Uterus (tissue), 4 donors: ENCODE measurements at regions of chr22 and their contacts with region 1.

Region 1: DNA sequence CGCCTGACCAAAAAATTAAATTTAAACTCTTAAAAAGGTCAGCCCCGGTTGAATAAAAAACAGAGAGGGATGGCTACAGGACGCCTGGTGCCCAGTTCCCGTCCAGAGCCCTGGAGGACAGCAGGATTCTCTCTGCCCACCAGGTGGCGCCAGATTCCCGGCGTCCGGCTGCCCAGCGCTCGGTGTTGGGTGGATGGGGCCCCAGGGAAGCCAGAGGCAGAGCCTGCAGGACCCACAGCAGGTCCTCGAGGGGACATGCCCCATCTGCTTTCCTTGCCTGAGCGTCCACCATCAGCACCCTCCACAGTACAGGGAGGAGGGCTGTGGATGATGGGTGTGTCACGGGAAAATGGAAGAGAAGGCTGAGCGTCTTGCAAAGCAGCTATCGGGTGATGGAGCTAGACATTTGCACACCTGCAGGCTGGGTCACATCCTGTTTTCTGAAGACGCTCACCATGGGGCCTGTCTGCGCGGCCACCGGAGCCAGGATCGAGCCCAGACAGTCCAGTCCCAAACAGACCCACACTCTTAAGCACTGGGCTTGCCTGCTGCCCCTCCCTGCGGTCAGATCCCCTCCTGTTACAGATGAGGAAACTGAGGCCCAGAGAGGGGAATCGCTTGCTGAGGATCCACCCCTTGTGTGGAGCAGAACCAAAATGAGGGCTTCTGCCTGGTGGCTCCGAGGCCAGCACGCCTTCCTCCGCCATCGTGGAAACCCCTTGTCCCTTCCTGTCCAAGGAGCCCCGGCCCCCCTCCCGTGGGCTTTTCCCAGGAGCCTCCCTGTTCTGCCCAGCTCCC is 18.5 kb upstream of the CBX7 start:
- DNase-seq: peak; percentile 81 to 86
- H3K4me3 ChIP-seq: no peak overlapping the region
- H3K27ac ChIP-seq: peak overlapping the region in 1 of 2 donors; percentile 1
- H3K4me1 ChIP-seq: peaks cover 0 to 33% of the 10 kb centered on the region in 2 donors
- H3K27me3 ChIP-seq: no peaks in the 10 kb centered on the region
- CTCF ChIP-seq: peak; percentile 96 to 99 (median 96)
- POLR2A ChIP-seq: peak in 1 of 2 donors; percentile 14

Region 2: DNA sequence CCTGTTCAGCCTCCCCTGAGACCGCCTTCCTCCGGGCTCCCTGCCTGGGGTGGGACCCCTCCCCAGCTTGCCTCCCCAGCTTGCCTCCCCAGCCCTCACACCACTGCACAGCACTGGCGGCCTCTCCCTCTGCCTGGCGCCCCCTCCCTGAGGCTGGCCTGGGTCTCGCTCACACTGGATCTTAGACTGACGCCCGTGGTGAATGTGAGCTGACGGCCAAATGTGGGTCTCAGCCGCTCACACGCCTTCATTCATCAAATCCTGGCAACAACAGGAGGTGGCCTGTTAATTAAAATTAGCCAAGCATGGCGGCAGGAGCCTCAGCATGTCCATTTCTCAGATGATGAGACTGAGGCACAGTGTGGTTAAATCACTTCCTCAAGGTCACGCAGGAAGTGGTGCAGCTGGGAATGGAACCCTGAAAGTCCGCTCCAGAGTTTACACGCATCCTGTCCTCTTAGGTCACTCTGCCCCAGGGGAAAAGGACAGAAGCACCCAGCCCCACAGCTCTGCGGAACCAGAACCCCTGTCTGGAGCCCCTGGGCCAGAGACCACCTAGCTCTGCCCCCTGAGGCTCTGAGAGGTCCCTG is 128.7 kb after region 1 on chr22:
- intact Hi-C with region 1: no loop called
- DNase-seq: no peak
- H3K4me3 ChIP-seq: no peak overlapping the region
- H3K27ac ChIP-seq: peak overlapping the region in 1 of 2 donors; percentile 40
- H3K4me1 ChIP-seq: peaks cover 0 to 26% of the 10 kb centered on the region in 2 donors
- H3K27me3 ChIP-seq: no peaks in the 10 kb centered on the region
- CTCF ChIP-seq: no peak
- POLR2A ChIP-seq: no peak

Region 3: GRCh38 chr22:39309881-39310714 is 139.1 kb after region 1 on chr22:
- intact Hi-C with region 1: loop called (anchors 2 kb)
- DNase-seq: no peak
- H3K4me3 ChIP-seq: no peak overlapping the region
- H3K27ac ChIP-seq: peak overlapping the region; percentile 83 to 84
- H3K4me1 ChIP-seq: peaks cover 0 to 10% of the 10 kb centered on the region in 2 donors
- H3K27me3 ChIP-seq: no peaks in the 10 kb centered on the region
- CTCF ChIP-seq: no peak
- POLR2A ChIP-seq: no peak

Region 4: DNA sequence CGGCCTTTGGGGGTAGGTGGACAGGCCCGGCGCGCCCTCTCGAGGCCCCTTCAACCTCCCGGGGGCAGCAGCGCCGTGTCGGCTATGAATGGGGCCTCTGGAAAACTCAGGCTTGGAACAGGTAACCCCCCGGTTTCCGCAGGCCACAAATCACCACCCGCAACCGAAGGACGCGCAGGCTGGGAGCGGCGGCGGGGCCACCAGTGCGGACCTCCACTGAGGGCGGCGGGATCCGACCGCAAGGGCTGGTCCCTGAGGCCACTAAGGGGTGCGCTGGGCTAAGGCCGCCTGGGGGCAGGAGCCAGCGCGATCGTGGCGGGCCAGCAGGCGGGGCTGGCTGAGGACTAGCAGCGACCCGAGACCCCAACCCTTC is 348.6 kb after region 1 on chr22:
- intact Hi-C with region 1: loop called (anchors 10 kb)
- DNase-seq: peak; percentile 61 to 66
- H3K4me3 ChIP-seq: peak overlapping the region; percentile 94 to 100
- H3K27ac ChIP-seq: peak overlapping the region; percentile 98 to 99
- H3K4me1 ChIP-seq: peaks cover 9 to 28% of the 10 kb centered on the region in 2 donors
- H3K27me3 ChIP-seq: no peaks in the 10 kb centered on the region
- CTCF ChIP-seq: peak; percentile 43 to 45 (median 43)
- POLR2A ChIP-seq: peak; percentile 71 to 72